Calu3 (cell line): ENCODE measurements at regions of chr17 and their contacts with region 1.

Region 1: DNA sequence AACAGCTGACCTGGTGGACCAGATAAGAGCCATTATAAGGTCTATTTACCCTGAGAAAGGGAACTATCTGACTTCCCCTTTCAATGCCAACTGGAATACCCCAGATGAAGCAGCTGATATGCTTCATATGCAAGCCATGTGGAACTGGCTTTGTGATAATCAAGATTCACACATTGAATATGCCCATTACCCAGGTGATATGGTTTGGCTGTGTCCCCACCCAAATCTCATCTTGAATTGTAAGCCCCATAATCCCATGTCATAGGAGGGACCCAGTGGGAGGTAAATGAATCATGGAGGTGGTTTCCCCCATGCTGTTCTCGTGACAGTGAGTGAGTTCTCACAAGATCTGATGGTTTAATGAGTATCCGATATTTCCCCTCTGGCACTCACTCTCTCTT is 42.1 kb downstream of the IKZF3 start:
- DNase-seq: peak; percentile 59
- H3K4me3 Mint-ChIP-seq: no peak overlapping the region
- H3K27ac Mint-ChIP-seq: no peak overlapping the region
- H3K4me1 Mint-ChIP-seq: peaks cover 9% of the 10 kb centered on the region
- H3K27me3 Mint-ChIP-seq: no peaks in the 10 kb centered on the region
- CTCF ChIP-seq: no peak

Region 2: GRCh38 chr17:39636927-39637736 is 184.9 kb before region 1 on chr17 and contains the start of gene STARD3:
- CTCF ChIA-PET with region 1: interaction called, 120 read pairs
- intact Hi-C with region 1: no loop called
- DNase-seq: no peak
- H3K4me3 Mint-ChIP-seq: peak within 1 kb of the TSS; percentile 71
- H3K27ac Mint-ChIP-seq: peak within 1 kb of the TSS; percentile 28
- H3K4me1 Mint-ChIP-seq: peaks cover 61% of the 10 kb centered on the region
- H3K27me3 Mint-ChIP-seq: peaks cover 5% of the 10 kb centered on the region
- CTCF ChIP-seq: no peak
- total RNA-seq, gene STARD3: 2,579 and 2,697 TPM in 2 replicates

Region 3: DNA sequence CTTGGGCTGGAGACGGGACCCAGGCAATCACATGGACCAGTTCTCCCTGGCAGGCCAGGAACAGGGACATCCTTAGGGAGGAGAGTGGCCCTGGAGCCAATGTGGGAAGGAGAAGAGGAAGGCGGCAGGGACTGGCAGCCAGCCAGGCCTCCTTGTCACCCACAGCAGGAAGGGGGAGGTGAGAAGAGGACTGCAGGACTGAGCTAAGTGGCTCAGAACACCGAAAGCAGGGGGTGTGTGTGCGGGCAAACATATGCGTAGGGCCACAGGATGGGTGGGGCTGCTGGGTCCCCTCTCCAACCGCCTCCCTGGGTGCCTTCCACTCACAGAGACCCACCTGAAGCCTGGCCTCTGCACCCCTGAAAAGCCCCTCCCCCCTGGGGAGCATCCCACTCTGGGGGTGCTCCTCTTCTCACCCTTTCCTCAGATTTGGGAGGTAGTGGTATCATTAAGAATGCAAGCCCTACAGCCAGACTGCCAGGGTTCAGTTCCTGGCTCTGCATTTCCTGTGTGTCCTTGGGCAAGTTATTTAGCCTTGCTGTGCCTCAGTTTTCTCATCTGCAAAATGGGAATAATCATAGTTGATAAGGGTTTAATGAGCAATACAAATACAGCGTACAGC is 145.7 kb before region 1 on chr17:
- CTCF ChIA-PET with region 1: interaction called, 127 read pairs
- intact Hi-C with region 1: no loop called
- DNase-seq: peak; percentile 100
- H3K4me3 Mint-ChIP-seq: peak overlapping the region; percentile 3
- H3K27ac Mint-ChIP-seq: peak overlapping the region; percentile 62
- H3K4me1 Mint-ChIP-seq: peaks cover 91% of the 10 kb centered on the region
- H3K27me3 Mint-ChIP-seq: peaks cover 6% of the 10 kb centered on the region
- CTCF ChIP-seq: no peak

Region 4: GRCh38 chr17:39704821-39705551 is 117.1 kb before region 1 on chr17:
- CTCF ChIA-PET with region 1: interaction called, 146 read pairs
- intact Hi-C with region 1: no loop called
- DNase-seq: peak; percentile 99
- H3K4me3 Mint-ChIP-seq: peak overlapping the region; percentile 71
- H3K27ac Mint-ChIP-seq: peak overlapping the region; percentile 67
- H3K4me1 Mint-ChIP-seq: peaks cover 92% of the 10 kb centered on the region
- H3K27me3 Mint-ChIP-seq: no peaks in the 10 kb centered on the region
- CTCF ChIP-seq: no peak

Region 5: DNA sequence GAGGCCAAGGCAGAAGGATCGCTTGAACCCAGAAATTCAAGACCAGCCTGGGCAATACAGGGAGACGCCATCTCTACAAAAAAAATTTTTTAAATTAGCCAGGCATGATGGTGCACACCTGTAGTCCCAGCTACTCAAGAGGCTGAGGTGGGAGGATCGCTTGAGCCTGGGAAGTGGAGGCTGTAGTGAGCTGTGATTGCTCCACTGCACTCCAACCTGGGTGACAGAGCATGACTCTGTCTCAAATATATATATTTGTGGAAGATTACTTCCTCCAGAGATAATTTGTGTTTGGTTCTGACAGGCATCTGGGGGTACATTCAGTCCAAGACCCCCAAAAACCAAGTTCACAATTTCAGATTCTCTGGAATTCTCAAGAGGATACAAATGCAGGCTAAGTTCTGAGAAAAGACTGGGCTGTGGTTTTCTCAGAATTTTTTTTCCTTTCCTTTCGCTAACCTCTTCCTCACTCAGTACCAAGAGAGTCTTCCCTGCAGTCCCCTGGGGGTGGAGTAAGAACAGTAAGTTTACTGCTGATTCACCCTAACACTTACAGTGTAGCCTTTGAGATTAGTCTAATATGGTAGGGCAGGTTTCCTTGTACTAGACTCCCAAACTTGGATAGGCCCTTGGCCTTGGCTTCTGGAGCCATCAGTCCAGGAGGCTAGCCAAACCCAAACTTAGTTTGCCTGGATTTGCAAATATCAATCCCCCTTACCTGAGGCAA is 81.3 kb after region 1 on chr17:
- CTCF ChIA-PET with region 1: interaction called, 1,004 read pairs
- intact Hi-C with region 1: no loop called
- DNase-seq: peak; percentile 66
- H3K4me3 Mint-ChIP-seq: no peak overlapping the region
- H3K27ac Mint-ChIP-seq: no peak overlapping the region
- H3K4me1 Mint-ChIP-seq: peaks cover 12% of the 10 kb centered on the region
- H3K27me3 Mint-ChIP-seq: no peaks in the 10 kb centered on the region
- CTCF ChIP-seq: no peak

Region 6: DNA sequence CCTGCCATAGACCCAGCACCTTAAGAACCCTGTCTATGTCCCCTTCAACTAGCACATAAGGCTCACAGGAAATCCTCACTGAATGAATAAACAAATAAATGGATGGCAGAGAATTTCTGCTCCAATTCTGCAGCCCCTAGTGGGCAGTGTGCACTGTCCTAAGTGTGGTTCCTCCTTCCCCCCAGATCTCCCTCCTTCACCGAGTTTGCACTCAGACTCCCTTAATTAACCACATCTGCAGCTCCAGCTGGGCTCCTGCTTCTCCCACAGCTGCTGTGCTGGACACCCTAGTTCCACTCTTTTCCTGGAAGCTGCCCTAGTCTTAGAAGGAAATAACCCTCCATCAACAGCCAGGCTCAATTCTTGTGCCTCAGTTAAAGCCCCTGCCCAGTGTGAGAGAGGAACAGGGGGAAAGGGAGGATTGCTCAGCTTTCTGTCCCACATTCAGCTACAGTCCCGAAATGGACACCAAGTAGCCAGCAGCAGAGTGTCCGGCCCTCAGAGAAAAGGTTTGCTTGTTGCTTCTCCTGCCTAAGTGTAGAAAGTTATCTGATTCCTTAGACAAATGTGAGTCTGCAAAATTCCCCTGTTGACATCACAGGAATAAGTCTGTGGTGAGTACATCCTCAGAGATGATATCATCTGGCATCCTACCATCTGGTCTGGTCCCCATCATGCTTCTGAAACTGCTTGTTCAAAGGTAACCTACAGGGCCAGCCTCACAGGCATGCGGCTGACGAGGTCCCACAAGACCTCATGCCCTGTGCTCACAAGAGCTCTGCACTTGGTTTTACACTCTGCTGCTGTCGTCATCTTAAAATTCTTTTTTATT is 117.8 kb after region 1 on chr17:
- CTCF ChIA-PET with region 1: interaction called, 1,809 read pairs
- intact Hi-C with region 1: no loop called
- DNase-seq: peak; percentile 76
- H3K4me3 Mint-ChIP-seq: no peak overlapping the region
- H3K27ac Mint-ChIP-seq: no peak overlapping the region
- H3K4me1 Mint-ChIP-seq: peaks cover 12% of the 10 kb centered on the region
- H3K27me3 Mint-ChIP-seq: peaks cover 63% of the 10 kb centered on the region
- CTCF ChIP-seq: no peak